Ascending aorta (tissue), 2 donors: ENCODE measurements at regions of chr12 and their contacts with region 1.

Region 1: GRCh38 chr12:58920102-58920960 is at the start of gene LRIG3:
- DNase-seq: peak; percentile 51 to 95
- H3K4me3 ChIP-seq: peak within 1 kb of the TSS; percentile 77 to 91
- H3K27ac ChIP-seq: peak within 1 kb of the TSS; percentile 93 to 97
- H3K4me1 ChIP-seq: peaks cover 2 to 16% of the 10 kb centered on the region in 2 donors
- H3K27me3 ChIP-seq: no peaks in the 10 kb centered on the region
- CTCF ChIP-seq: peak in 1 of 3 experiments; percentile 19
- total RNA-seq, gene LRIG3: 12.3 TPM

Region 2: DNA sequence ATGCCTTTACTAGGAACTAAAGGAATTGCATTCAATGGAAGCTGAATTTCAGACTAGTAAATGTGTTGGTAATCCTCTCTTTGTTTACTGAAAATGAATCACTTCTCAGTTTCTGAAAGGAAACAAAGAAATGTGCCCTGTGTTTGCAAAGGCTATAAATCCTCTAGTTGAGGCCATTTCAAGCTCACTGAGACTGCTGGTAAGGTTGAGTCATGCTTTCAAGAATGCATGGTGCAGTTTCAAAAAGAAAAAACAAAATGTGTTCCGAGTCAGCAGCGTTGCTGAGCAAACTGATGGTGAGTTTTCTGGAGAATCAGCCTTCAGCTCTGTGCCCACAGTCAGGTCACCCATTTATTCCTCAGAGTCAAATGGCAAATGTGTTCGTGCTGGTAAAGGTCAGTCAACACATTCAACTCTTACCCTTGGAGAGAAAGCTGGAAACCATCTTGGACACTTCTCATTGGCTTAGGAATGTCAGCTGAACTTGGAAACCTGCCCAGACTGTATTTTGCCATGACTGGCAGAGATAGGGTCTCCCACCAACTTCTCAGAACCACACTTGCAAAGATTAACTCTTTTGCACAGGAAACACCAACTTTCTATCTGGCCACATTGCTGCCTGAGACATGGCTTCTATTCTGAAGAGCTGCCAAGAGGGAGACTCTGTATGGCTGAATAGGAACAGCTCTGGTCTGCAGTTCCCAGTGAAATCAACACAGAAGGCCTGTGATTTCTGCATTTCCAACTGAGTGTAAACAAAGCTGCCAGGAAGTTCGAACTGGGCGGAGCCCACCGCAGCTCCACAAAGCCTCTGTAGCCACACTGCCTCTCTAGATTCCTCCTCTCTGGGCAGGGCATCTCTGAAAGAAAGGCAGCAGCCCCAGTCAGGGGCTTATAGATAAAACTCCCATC is 494.6 kb before region 1 on chr12:
- intact Hi-C with region 1: loop called (anchors 10 kb)
- DNase-seq: no peak
- H3K4me3 ChIP-seq: no peak overlapping the region
- H3K27ac ChIP-seq: peak overlapping the region; percentile 61 to 73
- H3K4me1 ChIP-seq: peaks cover 0 to 16% of the 10 kb centered on the region in 2 donors
- H3K27me3 ChIP-seq: no peaks in the 10 kb centered on the region
- CTCF ChIP-seq: no peak

Region 3: DNA sequence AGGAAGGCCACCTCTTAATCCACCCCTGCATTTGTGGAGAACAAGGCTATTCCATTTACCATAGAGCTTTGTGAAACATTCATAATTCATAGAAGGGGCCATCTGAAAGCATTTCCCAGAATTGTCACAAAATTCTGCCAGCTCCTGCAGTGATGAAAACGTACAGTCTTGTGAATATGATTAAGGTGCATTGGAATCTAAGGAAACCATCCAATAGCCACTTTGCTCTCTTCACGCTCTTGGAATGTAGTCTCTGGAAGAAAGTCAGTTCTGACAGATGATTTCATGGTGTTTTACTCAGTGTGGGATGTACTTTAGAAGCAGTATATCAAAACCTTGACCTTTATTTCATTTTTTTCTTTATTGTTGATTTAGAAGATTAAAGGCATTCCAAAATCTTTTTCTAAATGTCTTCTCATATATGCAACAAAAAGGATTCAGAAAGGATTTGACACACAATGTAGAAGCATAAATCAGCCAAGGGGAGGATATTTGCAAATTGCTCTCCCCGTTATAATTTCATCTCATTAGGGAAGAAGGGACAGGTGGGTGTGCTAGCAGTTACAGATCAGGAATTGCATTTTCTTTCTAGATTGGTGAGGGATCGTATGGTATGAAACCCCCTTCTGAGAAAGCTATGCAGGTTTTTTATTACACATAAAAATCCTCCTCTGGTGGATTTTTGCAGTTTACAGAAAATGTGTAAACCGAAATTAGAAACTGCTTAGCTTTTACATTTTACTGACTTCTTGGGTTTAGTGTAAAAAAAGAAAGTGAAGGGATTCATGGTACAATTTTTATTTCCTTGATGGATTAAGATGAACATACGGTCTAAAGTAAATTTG is 390.2 kb before region 1 on chr12:
- intact Hi-C with region 1: loop called (anchors 10 kb)
- DNase-seq: no peak
- H3K4me3 ChIP-seq: no peak overlapping the region
- H3K27ac ChIP-seq: no peak overlapping the region
- H3K4me1 ChIP-seq: peaks cover 0 to 15% of the 10 kb centered on the region in 2 donors
- H3K27me3 ChIP-seq: no peaks in the 10 kb centered on the region
- CTCF ChIP-seq: no peak

Region 4: GRCh38 chr12:58888131-58888783 is 32.1 kb before region 1 on chr12:
- intact Hi-C with region 1: loop called (anchors 2 kb)
- DNase-seq: no peak
- H3K4me3 ChIP-seq: no peak overlapping the region
- H3K27ac ChIP-seq: no peak overlapping the region
- H3K4me1 ChIP-seq: peaks cover 3 to 20% of the 10 kb centered on the region in 2 donors
- H3K27me3 ChIP-seq: no peaks in the 10 kb centered on the region
- CTCF ChIP-seq: no peak

Region 5: DNA sequence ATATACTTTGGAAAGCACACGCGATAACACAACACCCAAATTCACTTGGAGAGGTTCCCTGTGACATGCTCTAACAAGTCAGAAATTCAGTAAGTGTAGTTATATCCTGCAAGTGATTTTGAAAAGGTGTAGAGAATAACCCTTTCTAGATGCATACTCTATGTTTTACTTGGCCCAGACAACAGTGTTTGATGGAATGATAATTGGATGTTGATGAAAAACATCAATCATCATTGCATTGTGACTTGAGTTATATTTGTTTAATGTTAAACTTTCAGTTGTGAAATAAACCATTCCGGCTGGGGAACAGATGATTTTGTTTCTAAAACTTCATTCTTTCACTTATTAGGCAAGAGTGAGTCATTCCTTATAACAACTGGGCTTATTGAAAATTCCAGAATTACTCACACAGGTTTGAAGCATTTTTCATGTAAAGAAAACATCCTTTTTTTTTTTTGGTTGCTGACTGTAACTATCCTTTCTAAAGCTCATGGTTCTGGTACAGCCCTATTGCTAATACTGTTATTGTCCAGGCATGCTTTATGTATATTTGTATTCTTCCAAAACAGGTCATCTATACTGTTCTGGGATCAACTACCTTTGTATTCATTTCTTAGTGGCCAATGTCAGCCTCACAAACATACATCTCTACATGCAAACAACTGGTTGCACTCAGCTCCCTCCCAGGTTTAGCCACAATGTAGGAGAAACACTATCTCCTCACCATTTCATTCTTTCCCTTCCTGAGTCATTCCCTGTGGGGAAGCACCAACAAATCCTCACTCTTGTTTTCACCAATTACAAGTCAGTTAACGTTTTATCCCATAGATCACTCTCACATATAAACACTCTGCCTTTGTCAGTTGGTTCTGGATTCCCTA is 121.2 kb after region 1 on chr12:
- intact Hi-C with region 1: loop called (anchors 1 kb)
- DNase-seq: no peak
- H3K4me3 ChIP-seq: peak overlapping the region in 1 of 2 donors; percentile 23
- H3K27ac ChIP-seq: peak overlapping the region; percentile 65 to 75
- H3K4me1 ChIP-seq: peaks cover 0 to 12% of the 10 kb centered on the region in 2 donors
- H3K27me3 ChIP-seq: no peaks in the 10 kb centered on the region
- CTCF ChIP-seq: no peak

Region 6: GRCh38 chr12:59149997-59150642 is 229.8 kb after region 1 on chr12:
- intact Hi-C with region 1: loop called (anchors 5 kb)
- DNase-seq: no peak
- H3K4me3 ChIP-seq: no peak overlapping the region
- H3K27ac ChIP-seq: no peak overlapping the region
- H3K4me1 ChIP-seq: peaks cover 0 to 8% of the 10 kb centered on the region in 2 donors
- H3K27me3 ChIP-seq: no peaks in the 10 kb centered on the region
- CTCF ChIP-seq: peak; percentile 88 to 94 (median 93)

Region 7: DNA sequence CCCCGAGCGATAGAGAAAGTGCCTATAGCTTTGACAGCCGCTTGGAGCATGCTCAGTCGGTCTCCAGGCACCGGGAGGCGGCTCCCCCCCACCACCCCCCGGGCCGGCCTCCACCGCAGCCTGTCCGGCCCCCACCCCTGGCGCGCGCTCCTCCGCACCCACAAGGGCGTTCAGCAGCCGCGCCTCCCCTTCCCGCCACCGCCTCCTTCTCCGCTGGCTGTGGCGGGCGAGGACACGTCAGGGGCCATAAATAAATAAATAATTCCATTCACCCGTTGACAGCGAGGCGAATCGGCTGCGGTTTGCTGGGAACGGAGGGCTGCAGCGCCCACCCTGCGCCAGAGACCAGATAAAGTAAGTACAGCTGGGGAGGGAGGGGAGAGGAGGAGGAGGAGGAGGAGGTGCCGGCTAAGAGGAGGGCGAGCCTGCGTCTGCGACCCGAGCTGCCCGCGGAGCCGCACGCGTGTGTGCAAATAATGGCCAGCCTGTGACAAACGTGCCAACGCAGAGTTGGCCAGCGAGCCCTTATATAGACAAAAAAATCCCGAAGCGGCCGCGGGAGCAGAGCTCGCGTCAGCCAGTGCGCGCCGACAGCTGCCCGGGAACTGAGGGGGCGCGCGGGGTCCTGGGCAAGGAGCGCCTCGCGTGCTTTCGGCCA is 675.7 kb after region 1 on chr12 and contains the start of gene SLC16A7:
- intact Hi-C with region 1: loop called (anchors 5 kb)
- DNase-seq: peak; percentile 67 to 96
- H3K4me3 ChIP-seq: peak within 1 kb of the TSS; percentile 81 to 82
- H3K27ac ChIP-seq: peak within 1 kb of the TSS; percentile 98 to 99
- H3K4me1 ChIP-seq: peaks cover 0 to 15% of the 10 kb centered on the region in 2 donors
- H3K27me3 ChIP-seq: no peaks in the 10 kb centered on the region
- CTCF ChIP-seq: peak in 1 of 3 experiments; percentile 2
- total RNA-seq, gene SLC16A7: 12.6 TPM